ENCODE measurements at regions of chr2 and their contacts with region 1.

Region 1: GRCh38 chr2:181457121-181457740 is at the start of gene ITGA4:
- DNase-seq: peak; percentile 88
- H3K4me3 Mint-ChIP-seq: peak within 1 kb of the TSS; percentile 92
- H3K27ac Mint-ChIP-seq: peak within 1 kb of the TSS; percentile 93
- H3K4me1 Mint-ChIP-seq: peaks cover 39% of the 10 kb centered on the region
- H3K27me3 Mint-ChIP-seq: no peaks in the 10 kb centered on the region
- total RNA-seq, gene ITGA4: 26.6 to 27.8 TPM

Region 2: DNA sequence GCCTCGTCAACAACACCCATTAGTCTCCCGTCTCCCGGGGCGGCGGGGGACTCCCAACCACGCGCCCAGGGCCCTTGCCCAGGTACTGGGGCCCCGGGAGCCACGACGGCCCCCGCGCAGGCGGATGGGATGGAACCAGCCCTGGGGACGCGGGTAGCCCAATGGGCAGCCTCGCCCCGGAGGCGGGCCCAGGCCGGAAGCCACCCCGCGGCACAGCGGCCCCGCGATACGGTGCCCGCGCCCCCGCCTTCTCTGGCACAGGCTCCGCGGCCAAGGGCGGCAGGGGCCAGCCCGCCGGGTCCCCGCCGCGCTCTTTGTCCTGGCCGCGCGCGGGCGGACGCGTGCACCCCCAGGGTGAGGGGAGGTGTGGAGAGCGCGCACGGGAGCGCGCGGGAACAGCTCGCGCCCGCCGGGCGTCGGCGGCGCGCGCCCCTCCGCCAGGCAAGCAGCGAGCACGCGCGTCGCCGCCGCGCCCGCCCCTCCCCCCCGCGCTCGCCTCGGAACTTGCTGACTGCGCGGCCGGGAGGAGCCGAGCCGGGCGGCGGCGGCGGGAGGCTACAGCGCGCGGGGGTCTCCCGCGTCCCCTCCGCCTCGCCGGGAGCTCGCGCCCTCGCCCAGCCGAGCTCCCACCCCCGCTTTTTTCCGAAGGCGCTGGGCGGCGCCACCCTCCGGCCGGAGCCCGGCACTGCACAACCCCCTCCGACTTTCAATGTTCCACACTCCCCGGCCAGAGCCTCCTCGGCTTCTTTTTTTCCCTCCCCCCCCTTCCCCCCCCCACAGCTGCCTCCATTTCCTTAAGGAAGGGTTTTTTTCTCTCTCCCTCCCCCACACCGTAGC is 476.9 kb before region 1 on chr2 and contains the start of gene UBE2E3:
- CTCF ChIA-PET with region 1: no interaction called
- intact Hi-C with region 1: loop called (anchors 1 kb)
- DNase-seq: peak; percentile 85
- H3K4me3 Mint-ChIP-seq: peak within 1 kb of the TSS; percentile 95
- H3K27ac Mint-ChIP-seq: peak within 1 kb of the TSS; percentile 91
- H3K4me1 Mint-ChIP-seq: peaks cover 29% of the 10 kb centered on the region
- H3K27me3 Mint-ChIP-seq: no peaks in the 10 kb centered on the region
- total RNA-seq, gene UBE2E3: 25.8 to 29.5 TPM

Region 3: DNA sequence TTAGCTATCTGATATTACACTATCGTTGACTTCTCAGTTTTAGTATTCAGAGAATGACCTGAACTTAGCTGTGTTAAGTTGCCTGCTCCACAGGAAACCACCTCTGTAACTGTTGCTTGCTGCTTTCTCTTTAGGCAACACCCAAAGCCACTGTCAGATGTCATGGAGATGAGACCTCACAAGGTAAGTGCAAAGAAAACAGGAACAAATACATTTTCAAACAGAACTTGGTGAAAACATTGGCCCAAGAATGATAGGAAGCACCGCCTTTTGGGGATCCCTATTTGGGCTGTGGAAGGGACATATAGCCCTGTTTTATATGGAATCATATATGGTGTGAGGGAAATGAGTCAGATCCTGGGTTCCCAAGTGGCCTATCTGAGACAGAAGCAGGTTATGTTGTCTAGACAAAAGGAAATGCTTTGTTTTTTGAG is 333.4 kb before region 1 on chr2:
- CTCF ChIA-PET with region 1: interaction called, 4 read pairs
- intact Hi-C with region 1: loop called (anchors 1 kb)
- DNase-seq: peak; percentile 65
- H3K4me3 Mint-ChIP-seq: peak overlapping the region; percentile 65
- H3K27ac Mint-ChIP-seq: peak overlapping the region; percentile 89
- H3K4me1 Mint-ChIP-seq: peaks cover 54% of the 10 kb centered on the region
- H3K27me3 Mint-ChIP-seq: no peaks in the 10 kb centered on the region

Region 4: GRCh38 chr2:181394741-181395437 is 62.3 kb before region 1 on chr2:
- CTCF ChIA-PET with region 1: interaction called, 3 read pairs
- intact Hi-C with region 1: loop called (anchors 2 kb)
- DNase-seq: no peak
- H3K4me3 Mint-ChIP-seq: peak overlapping the region; percentile 31
- H3K27ac Mint-ChIP-seq: peak overlapping the region; percentile 66
- H3K4me1 Mint-ChIP-seq: peaks cover 28% of the 10 kb centered on the region
- H3K27me3 Mint-ChIP-seq: no peaks in the 10 kb centered on the region

Region 5: DNA sequence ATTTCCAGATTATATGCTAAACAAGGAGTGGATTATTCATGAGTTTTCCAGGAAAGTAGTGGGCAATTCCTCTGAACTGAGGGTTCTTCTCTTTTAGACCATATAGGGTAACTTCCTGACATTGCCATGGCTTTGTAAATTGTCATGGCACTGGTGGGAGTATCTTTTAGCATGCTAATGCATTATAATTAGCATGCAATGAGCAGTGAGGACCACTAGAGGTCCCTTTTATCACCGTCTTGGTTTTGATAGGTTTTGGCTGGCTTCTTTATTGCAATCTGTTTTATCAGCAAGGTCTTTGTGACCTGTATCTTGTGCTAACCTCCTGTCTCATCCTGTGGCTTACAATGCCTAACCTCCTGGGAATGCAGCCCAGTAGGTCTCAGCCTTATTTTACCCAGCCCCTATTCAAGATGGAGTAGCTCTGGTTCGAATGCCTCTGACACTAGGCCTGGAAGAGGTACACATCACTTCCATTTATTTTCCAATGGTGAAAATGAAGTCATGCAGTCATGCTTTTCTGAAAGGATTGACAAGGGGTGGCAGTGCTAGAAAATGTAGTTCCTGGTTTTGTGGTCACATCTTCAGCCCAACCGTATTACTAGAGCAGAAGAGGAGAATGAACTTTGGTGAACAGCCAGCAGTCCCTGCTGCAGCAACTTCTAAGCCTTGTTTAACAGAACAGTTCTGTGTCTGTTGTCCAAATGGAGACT is 26.7 kb before region 1 on chr2:
- CTCF ChIA-PET with region 1: interaction called, 5 read pairs
- intact Hi-C with region 1: loop called (anchors 1 kb)
- DNase-seq: peak; percentile 27
- H3K4me3 Mint-ChIP-seq: no peak overlapping the region
- H3K27ac Mint-ChIP-seq: no peak overlapping the region
- H3K4me1 Mint-ChIP-seq: peaks cover 24% of the 10 kb centered on the region
- H3K27me3 Mint-ChIP-seq: no peaks in the 10 kb centered on the region

Region 6: GRCh38 chr2:181715033-181715630 is 257.9 kb after region 1 on chr2:
- CTCF ChIA-PET with region 1: interaction called, 8 read pairs
- intact Hi-C with region 1: loop called (anchors 2 kb)
- DNase-seq: peak; percentile 89
- H3K4me3 Mint-ChIP-seq: no peak overlapping the region
- H3K27ac Mint-ChIP-seq: no peak overlapping the region
- H3K4me1 Mint-ChIP-seq: no peaks in the 10 kb centered on the region
- H3K27me3 Mint-ChIP-seq: no peaks in the 10 kb centered on the region

Measured in activated naive CD4-positive, alpha-beta T cell treated with anti-CD3 and anti-CD28 coated beads for 36 hours (primary cell).